ENCODE measurements at regions of chr2 and their contacts with region 1.

Region 1: GRCh38 chr2:108960006-108960405 is 29.0 kb downstream of the EDAR start:
- DNase-seq: no peak
- ATAC-seq: no peak
- H3K4me3 Mint-ChIP-seq: peak overlapping the region in 5 of 10 donors; percentile 23 to 83 (median 33)
- H3K27ac Mint-ChIP-seq: peak overlapping the region; percentile 25 to 92 (median 65)
- H3K4me1 Mint-ChIP-seq: peaks cover 48 to 83% (median 76%) of the 10 kb centered on the region in 4 donors
- H3K27me3 Mint-ChIP-seq: no peaks in the 10 kb centered on the region

Region 2: DNA sequence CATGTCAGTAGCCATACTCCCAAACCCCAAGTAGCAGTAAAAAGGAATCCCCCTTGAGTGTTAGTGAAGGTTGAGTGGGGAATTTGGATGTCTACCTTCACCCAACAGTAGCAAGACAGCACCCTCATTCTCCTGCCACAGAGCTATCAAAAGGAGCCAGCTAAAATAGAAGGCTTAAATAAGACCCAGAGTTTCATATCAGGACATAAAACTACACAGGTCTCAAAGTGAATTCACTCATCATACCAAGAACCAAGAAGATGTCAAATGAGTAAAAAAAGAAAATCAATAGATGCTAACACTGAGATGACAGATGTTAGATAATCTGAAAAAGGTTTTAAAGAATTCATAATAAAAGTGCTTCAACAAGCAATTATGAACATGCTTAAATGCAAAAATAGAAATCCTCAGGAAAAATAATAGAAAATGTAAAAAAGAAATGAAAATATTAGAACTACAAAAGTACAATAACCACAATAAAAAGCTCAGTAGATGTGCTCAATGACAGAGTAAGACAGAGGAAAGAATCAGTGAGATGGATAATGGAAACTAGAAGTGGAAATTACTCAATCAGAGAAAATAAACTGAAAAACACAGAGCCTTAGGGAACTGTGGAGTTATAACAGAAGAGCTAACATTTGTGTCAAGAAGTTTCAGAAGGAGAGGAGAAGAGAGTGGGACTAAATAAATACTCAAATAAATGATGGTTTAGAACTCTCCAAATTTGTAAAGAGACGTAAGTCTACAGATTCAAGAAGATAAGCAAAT is 61.5 kb before region 1 on chr2:
- POLR2A ChIA-PET with region 1: no interaction called
- DNase-seq: no peak
- ATAC-seq: no peak
- H3K4me3 Mint-ChIP-seq: no peak overlapping the region
- H3K27ac Mint-ChIP-seq: peak overlapping the region in 1 of 10 donors; percentile 4
- H3K4me1 Mint-ChIP-seq: peaks cover 0 to 4% (median 0%) of the 10 kb centered on the region in 4 donors
- H3K27me3 Mint-ChIP-seq: no peaks in the 10 kb centered on the region

Region 3: GRCh38 chr2:108944601-108945331 is 15.2 kb before region 1 on chr2:
- POLR2A ChIA-PET with region 1: no interaction called
- DNase-seq: no peak
- ATAC-seq: no peak
- H3K4me3 Mint-ChIP-seq: no peak overlapping the region
- H3K27ac Mint-ChIP-seq: peak overlapping the region in 2 of 10 donors; percentile 9 to 35
- H3K4me1 Mint-ChIP-seq: peaks cover 0 to 23% (median 8%) of the 10 kb centered on the region in 4 donors
- H3K27me3 Mint-ChIP-seq: no peaks in the 10 kb centered on the region

Region 4: GRCh38 chr2:108971661-108972566 is 11.9 kb after region 1 on chr2:
- POLR2A ChIA-PET with region 1: interaction called, 21 read pairs
- DNase-seq: no peak
- ATAC-seq: peak in 1 of 2 donors; percentile 38
- H3K4me3 Mint-ChIP-seq: peak overlapping the region in 6 of 10 donors; percentile 3 to 50 (median 17)
- H3K27ac Mint-ChIP-seq: peak overlapping the region in 5 of 10 donors; percentile 11 to 67 (median 40)
- H3K4me1 Mint-ChIP-seq: peaks cover 42 to 88% (median 68%) of the 10 kb centered on the region in 4 donors
- H3K27me3 Mint-ChIP-seq: no peaks in the 10 kb centered on the region

Region 5: GRCh38 chr2:109089602-109090300 is 129.7 kb after region 1 on chr2:
- POLR2A ChIA-PET with region 1: no interaction called
- DNase-seq: no peak
- ATAC-seq: no peak
- H3K4me3 Mint-ChIP-seq: no peak overlapping the region
- H3K27ac Mint-ChIP-seq: peak overlapping the region in 1 of 10 donors; percentile 27
- H3K4me1 Mint-ChIP-seq: peaks cover 2 to 14% (median 10%) of the 10 kb centered on the region in 4 donors
- H3K27me3 Mint-ChIP-seq: no peaks in the 10 kb centered on the region

Measured in naive thymus-derived CD8-positive, alpha-beta T cell (primary cell).